ENCODE measurements at regions of chr22 and their contacts with region 1.

Region 1: DNA sequence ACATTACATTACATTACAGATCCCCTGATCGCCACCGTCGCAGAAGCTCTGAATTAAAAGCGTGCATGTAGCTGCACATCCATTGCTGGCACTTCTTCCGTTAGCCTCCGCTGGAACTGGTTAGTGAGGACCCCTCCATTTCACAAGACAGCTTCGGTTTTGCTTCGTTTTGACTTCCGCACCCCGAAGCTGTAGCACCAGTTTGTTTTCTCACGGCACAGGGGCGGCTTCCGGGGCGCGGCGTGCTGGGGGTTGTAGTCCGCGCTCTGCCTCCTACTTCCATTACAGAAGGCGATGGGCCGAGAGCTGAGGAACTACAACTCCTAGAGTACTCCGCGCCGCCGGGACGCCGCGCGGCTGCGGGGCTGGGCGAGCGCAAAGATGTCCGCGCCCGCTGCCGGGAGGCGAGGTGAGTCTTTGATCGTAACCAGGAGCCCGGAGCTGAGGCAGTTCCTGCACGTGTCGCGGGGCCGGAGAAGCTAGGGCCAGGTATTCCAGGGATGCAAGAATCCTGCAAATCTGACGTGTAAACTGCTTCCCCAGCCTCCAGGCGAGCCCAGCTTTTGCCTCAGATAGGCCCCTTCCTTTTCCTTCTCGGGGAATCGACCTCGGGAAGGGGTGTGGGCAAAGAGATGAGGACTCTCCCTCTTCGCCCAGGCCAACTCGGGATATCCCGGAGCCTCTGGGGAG is at the start of gene PEX26:
- DNase-seq: peak; percentile 87
- H3K27ac ChIP-seq: peak within 1 kb of the TSS; percentile 77
- CTCF ChIP-seq: no peak

Region 2: GRCh38 chr22:17830043-17830961 is 247.5 kb before region 1 on chr22:
- CTCF ChIA-PET with region 1: interaction called, 25 read pairs
- POLR2A ChIA-PET with region 1: interaction called, 3 read pairs
- DNase-seq: peak; percentile 81
- H3K27ac ChIP-seq: peak overlapping the region; percentile 41
- CTCF ChIP-seq: peak; percentile 99

Region 3: DNA sequence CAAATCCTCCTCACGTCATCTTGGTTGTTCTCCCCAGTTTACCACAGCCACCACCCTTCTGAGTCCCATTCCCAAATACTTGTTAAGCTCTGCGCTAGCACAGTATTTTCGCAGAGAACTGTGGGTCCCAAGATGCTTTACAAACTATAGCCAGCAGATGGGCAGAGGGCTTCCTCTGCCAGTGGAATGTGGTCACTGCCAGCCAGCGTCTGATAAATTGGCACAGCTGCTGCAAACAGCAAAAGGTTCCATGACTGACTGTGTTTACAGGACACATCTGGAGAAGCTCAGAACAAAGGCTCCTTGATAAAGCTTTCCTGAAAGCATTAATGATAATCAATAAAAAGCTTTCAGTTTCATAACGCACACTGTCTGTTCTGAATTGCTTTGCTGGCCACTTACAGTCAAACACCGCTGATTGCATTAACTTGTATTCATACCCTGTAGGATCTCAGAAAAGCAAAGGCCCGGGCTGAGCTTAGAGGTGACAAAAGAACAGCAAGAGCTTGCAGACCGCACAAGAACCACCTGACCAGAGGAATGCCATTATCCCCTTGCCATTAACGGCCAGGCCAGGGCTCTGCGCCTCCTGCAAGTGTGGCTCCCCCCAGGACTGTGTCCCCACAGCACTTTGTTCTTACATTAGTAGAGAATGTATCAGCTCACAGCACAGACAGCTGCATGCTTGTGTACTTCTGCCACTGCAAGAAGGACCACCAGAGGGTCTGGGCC is 174.1 kb before region 1 on chr22:
- CTCF ChIA-PET with region 1: no interaction called
- POLR2A ChIA-PET with region 1: no interaction called
- DNase-seq: no peak
- H3K27ac ChIP-seq: no peak overlapping the region
- CTCF ChIP-seq: no peak